ENCODE measurements at regions of chr13 and their contacts with region 1.

Region 1: DNA sequence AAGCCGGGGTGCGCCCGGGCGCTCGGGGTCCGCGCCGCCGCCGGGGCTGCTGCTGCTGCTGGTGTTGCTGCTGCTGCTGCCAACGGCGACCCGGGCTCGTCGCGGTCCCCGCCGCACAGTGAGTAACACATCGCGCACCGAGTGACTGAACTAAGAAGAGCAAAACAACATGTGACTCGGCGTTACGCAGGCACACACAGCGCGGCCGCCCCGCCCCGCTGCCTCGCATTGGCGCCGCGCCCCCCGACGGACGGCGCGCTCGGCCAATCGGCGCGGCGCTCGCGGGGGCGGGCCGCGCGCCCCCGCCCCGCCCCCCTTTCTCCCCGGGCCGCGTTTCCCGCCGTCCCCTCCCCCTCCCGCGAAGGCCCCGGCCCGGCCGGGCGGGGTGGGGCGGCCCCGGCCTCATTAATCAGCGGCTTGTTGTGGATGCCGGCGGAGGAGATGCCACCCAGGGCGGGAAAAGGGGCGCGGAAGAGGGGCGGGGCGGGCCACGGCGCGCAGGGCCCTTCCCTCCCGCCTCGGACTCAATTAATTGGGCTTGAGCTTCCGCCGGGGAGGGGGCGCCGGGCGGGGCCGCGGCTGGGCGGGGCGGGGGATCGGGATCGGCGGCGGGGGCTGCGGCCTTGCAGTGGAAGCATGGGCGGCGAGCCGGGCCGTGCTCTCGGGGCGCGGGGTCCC is at the start of gene IRS2:
- DNase-seq: peak; percentile 86 to 97 (median 96)
- ATAC-seq: peak; percentile 89
- H3K4me3 ChIP-seq: peak within 1 kb of the TSS; percentile 53
- H3K4me3 Mint-ChIP-seq: peak within 1 kb of the TSS; percentile 74 to 92 (median 84)
- H3K27ac ChIP-seq: peak within 1 kb of the TSS; percentile 80
- H3K27ac Mint-ChIP-seq: peak within 1 kb of the TSS; percentile 74 to 95 (median 89)
- H3K4me1 ChIP-seq: peaks cover 0 to 6% of the 10 kb centered on the region in 2 donors
- H3K4me1 Mint-ChIP-seq: peaks cover 15 to 33% (median 24%) of the 10 kb centered on the region in 7 donors
- H3K27me3 ChIP-seq: no peaks in the 10 kb centered on the region
- H3K27me3 Mint-ChIP-seq: peaks cover 0 to 35% (median 0%) of the 10 kb centered on the region in 5 donors
- total RNA-seq, gene IRS2: 3.8 to 94.9 (median 26.9) TPM

Region 2: GRCh38 chr13:108322206-108322824 is 1464.3 kb before region 1 on chr13:
- CTCF ChIA-PET with region 1: no interaction called
- POLR2A ChIA-PET with region 1: no interaction called
- intact Hi-C with region 1: loop called in 1 of 2 experiments (anchors 5 kb)
- DNase-seq: peak in 7 of 9 donors; percentile 12 to 58 (median 48)
- ATAC-seq: peak; percentile 92
- H3K4me3 ChIP-seq: no peak overlapping the region
- H3K4me3 Mint-ChIP-seq: no peak overlapping the region
- H3K27ac ChIP-seq: no peak overlapping the region
- H3K27ac Mint-ChIP-seq: no peak overlapping the region
- H3K4me1 ChIP-seq: peaks cover 0 to 12% of the 10 kb centered on the region in 2 donors
- H3K4me1 Mint-ChIP-seq: peaks cover 0 to 33% (median 17%) of the 10 kb centered on the region in 7 donors
- H3K27me3 ChIP-seq: no peaks in the 10 kb centered on the region
- H3K27me3 Mint-ChIP-seq: peaks cover 5 to 47% (median 7%) of the 10 kb centered on the region in 5 donors

Region 3: GRCh38 chr13:109145631-109146030 is 641.0 kb before region 1 on chr13:
- CTCF ChIA-PET with region 1: no interaction called
- POLR2A ChIA-PET with region 1: no interaction called
- intact Hi-C with region 1: loop called (anchors 1 kb)
- DNase-seq: peak in 4 of 9 donors; percentile 10 to 17 (median 14)
- ATAC-seq: peak; percentile 61
- H3K4me3 ChIP-seq: no peak overlapping the region
- H3K4me3 Mint-ChIP-seq: no peak overlapping the region
- H3K27ac ChIP-seq: no peak overlapping the region
- H3K27ac Mint-ChIP-seq: no peak overlapping the region
- H3K4me1 ChIP-seq: no peaks in the 10 kb centered on the region
- H3K4me1 Mint-ChIP-seq: peaks cover 0 to 2% (median 0%) of the 10 kb centered on the region in 7 donors
- H3K27me3 ChIP-seq: peaks cover 0 to 6% of the 10 kb centered on the region in 2 donors
- H3K27me3 Mint-ChIP-seq: peaks cover 20 to 51% (median 47%) of the 10 kb centered on the region in 5 donors

Region 4: DNA sequence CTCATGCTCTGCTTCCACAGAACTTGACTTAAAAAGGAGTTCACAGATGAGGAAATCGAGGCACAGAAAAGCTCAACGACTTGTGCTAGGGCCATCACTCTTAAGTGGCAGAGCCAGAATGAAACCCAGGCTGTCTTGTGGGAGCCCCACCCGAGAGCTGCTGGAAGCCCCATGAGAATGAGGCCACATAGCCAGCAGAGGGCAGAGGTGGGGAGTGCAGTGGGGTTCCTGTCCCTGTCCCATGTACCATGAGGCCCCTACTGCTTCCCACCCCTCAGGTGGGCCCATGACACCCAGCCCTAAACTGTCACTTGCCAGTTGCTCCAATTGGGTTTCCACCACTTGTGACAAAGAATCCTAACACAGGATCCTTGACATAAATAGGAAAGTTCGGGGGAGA is 176.1 kb before region 1 on chr13:
- CTCF ChIA-PET with region 1: interaction called, 4 read pairs
- POLR2A ChIA-PET with region 1: no interaction called
- intact Hi-C with region 1: loop called (anchors 1 kb)
- DNase-seq: peak in 8 of 9 donors; percentile 4 to 36 (median 26)
- ATAC-seq: peak; percentile 80
- H3K4me3 ChIP-seq: no peak overlapping the region
- H3K4me3 Mint-ChIP-seq: no peak overlapping the region
- H3K27ac ChIP-seq: no peak overlapping the region
- H3K27ac Mint-ChIP-seq: no peak overlapping the region
- H3K4me1 ChIP-seq: no peaks in the 10 kb centered on the region
- H3K4me1 Mint-ChIP-seq: peaks cover 0 to 8% (median 0%) of the 10 kb centered on the region in 7 donors
- H3K27me3 ChIP-seq: no peaks in the 10 kb centered on the region
- H3K27me3 Mint-ChIP-seq: no peaks in the 10 kb centered on the region

Region 5: GRCh38 chr13:109720758-109721184 is 65.8 kb before region 1 on chr13:
- CTCF ChIA-PET with region 1: no interaction called
- POLR2A ChIA-PET with region 1: no interaction called
- intact Hi-C with region 1: no loop called
- DNase-seq: no peak
- ATAC-seq: no peak
- H3K4me3 ChIP-seq: no peak overlapping the region
- H3K4me3 Mint-ChIP-seq: no peak overlapping the region
- H3K27ac ChIP-seq: no peak overlapping the region
- H3K27ac Mint-ChIP-seq: no peak overlapping the region
- H3K4me1 ChIP-seq: no peaks in the 10 kb centered on the region
- H3K4me1 Mint-ChIP-seq: peaks cover 0 to 6% (median 4%) of the 10 kb centered on the region in 7 donors
- H3K27me3 ChIP-seq: no peaks in the 10 kb centered on the region
- H3K27me3 Mint-ChIP-seq: peaks cover 0 to 8% (median 6%) of the 10 kb centered on the region in 5 donors

Region 6: GRCh38 chr13:110116072-110116487 is 329.5 kb after region 1 on chr13:
- CTCF ChIA-PET with region 1: no interaction called
- POLR2A ChIA-PET with region 1: no interaction called
- intact Hi-C with region 1: loop called in 1 of 2 experiments (anchors 10 kb)
- DNase-seq: peak in 8 of 9 donors; percentile 6 to 67 (median 24)
- ATAC-seq: peak; percentile 63
- H3K4me3 ChIP-seq: no peak overlapping the region
- H3K4me3 Mint-ChIP-seq: peak overlapping the region in 1 of 10 donors; percentile 48
- H3K27ac ChIP-seq: no peak overlapping the region
- H3K27ac Mint-ChIP-seq: peak overlapping the region in 1 of 9 donors; percentile 5
- H3K4me1 ChIP-seq: no peaks in the 10 kb centered on the region
- H3K4me1 Mint-ChIP-seq: peaks cover 0 to 3% (median 0%) of the 10 kb centered on the region in 7 donors
- H3K27me3 ChIP-seq: no peaks in the 10 kb centered on the region
- H3K27me3 Mint-ChIP-seq: peaks cover 12 to 59% (median 36%) of the 10 kb centered on the region in 5 donors

Region 7: DNA sequence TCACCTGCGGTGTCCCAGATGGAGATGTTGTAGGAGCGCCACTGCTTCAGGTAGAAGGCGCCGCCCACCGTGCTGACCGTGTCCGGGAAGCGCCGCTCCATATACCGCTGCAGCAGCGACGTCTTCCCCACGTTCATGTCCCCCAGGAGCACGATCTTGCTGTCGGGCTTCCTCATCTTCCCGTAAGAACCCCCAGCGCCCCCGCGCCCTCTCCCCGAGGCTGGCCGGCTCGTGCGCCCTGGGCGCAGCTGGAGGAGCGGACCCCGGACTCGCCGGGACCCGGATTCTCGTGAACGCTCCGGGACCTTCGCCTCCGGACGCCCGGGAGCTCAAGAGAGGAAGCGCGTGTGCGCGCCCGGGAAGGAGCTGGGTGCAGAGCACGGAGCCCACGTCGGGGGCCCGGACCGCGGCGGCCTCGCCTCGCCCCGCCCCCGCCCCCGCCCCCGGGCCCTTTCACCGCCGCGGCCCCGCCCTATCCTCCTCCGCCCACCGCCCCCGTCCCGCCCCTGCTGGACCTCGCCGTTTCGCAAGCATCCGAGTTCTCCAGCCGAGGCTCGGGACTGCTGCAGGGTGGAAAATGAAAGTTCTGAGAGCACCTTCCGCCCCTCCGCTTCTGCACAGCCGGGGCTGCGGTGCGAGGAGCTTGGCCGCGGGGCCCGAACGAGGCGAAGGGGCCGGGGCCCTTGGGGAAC is 774.9 kb after region 1 on chr13 and contains the start of gene RAB20:
- CTCF ChIA-PET with region 1: no interaction called
- POLR2A ChIA-PET with region 1: no interaction called
- intact Hi-C with region 1: loop called in 1 of 2 experiments (anchors 5 kb)
- DNase-seq: peak; percentile 5 to 66 (median 37)
- ATAC-seq: peak; percentile 82
- H3K4me3 ChIP-seq: peak within 1 kb of the TSS; percentile 79
- H3K4me3 Mint-ChIP-seq: peak within 1 kb of the TSS; percentile 85 to 99 (median 98)
- H3K27ac ChIP-seq: peak within 1 kb of the TSS; percentile 66
- H3K27ac Mint-ChIP-seq: peak within 1 kb of the TSS; percentile 73 to 96 (median 88)
- H3K4me1 ChIP-seq: peaks cover 4 to 9% of the 10 kb centered on the region in 2 donors
- H3K4me1 Mint-ChIP-seq: peaks cover 22 to 53% (median 41%) of the 10 kb centered on the region in 7 donors
- H3K27me3 ChIP-seq: no peaks in the 10 kb centered on the region
- H3K27me3 Mint-ChIP-seq: peaks cover 0 to 32% (median 4%) of the 10 kb centered on the region in 5 donors
- total RNA-seq, gene RAB20: 2.0 to 13.6 (median 4.0) TPM